GM13976 (cell line): ENCODE measurements at regions of chr1 and their contacts with region 1.

Region 1: GRCh38 chr1:44220001-44220733 is 6.9 kb downstream of the DMAP1 start:
- DNase-seq: no peak
- CTCF ChIP-seq: no peak

Region 2: DNA sequence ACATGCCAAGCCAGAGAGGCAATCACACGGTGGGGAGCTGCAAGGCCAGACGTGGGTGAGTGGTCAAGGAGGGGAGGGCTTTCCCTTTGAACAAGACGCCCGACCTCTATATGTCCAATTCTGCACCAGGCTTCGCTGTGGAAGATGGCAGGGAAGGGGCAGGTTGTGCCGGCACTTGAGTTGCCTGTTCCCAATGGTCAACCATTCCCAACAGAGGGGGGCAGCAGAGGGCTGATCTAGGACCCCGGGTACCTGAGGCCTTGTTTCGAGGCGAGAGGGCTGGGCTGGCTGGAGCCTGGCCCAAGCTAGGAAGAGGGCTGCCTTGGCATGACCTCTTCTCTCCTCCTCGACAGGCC is 389.2 kb after region 1 on chr1:
- in situ Hi-C with region 1: loop called (anchors 10 kb)
- DNase-seq: peak; percentile 71
- CTCF ChIP-seq: peak; percentile 40